ENCODE measurements at regions of chr6 and their contacts with region 1.

Region 1: GRCh38 chr6:16964553-16965501 is 137.0 kb upstream of the STMND1 start:
- DNase-seq: peak; percentile 67
- ATAC-seq: peak; percentile 99
- H3K4me3 ChIP-seq: peak overlapping the region in 1 of 3 experiments; percentile 32; a peak in 2 of 6 replicates
- H3K27ac ChIP-seq: no peak overlapping the region
- H3K4me1 ChIP-seq: peaks cover 6% of the 10 kb centered on the region
- H3K27me3 ChIP-seq: peaks cover 0 to 21% of the 10 kb centered on the region in 2 experiments; a peak in 2 of 5 replicates
- CTCF ChIP-seq: peak; percentile 97
- EP300 ChIP-seq: no peak
- POLR2A ChIP-seq: no peak
- RAD21 ChIP-seq: peak; percentile 88

Region 2: GRCh38 chr6:16286148-16286522 is 678.7 kb before region 1 on chr6:
- CTCF ChIA-PET with region 1: interaction called, 17 read pairs
- POLR2A ChIA-PET with region 1: no interaction called
- in situ Hi-C with region 1: no loop called
- intact Hi-C with region 1: loop called (anchors 5 kb)
- DNase-seq: peak; percentile 37
- ATAC-seq: peak; percentile 86
- H3K4me3 ChIP-seq: no peak overlapping the region
- H3K27ac ChIP-seq: no peak overlapping the region
- H3K4me1 ChIP-seq: no peaks in the 10 kb centered on the region
- H3K27me3 ChIP-seq: peaks cover 1 to 11% of the 10 kb centered on the region in 2 experiments; a peak in 2 of 5 replicates
- CTCF ChIP-seq: peak; percentile 94
- EP300 ChIP-seq: no peak
- POLR2A ChIP-seq: no peak
- RAD21 ChIP-seq: peak; percentile 86

Region 3: GRCh38 chr6:16514249-16514648 is 450.6 kb before region 1 on chr6:
- CTCF ChIA-PET with region 1: no interaction called
- POLR2A ChIA-PET with region 1: no interaction called
- in situ Hi-C with region 1: loop called (anchors 25 kb)
- intact Hi-C with region 1: loop called (anchors 5 kb)
- DNase-seq: peak; percentile 28
- ATAC-seq: peak; percentile 44
- H3K4me3 ChIP-seq: no peak overlapping the region
- H3K27ac ChIP-seq: no peak overlapping the region
- H3K4me1 ChIP-seq: peaks cover 20% of the 10 kb centered on the region
- H3K27me3 ChIP-seq: no peaks in the 10 kb centered on the region
- CTCF ChIP-seq: peak; percentile 43; the same call in 1 of the 2 replicates
- EP300 ChIP-seq: no peak
- POLR2A ChIP-seq: no peak
- RAD21 ChIP-seq: no peak

Region 4: DNA sequence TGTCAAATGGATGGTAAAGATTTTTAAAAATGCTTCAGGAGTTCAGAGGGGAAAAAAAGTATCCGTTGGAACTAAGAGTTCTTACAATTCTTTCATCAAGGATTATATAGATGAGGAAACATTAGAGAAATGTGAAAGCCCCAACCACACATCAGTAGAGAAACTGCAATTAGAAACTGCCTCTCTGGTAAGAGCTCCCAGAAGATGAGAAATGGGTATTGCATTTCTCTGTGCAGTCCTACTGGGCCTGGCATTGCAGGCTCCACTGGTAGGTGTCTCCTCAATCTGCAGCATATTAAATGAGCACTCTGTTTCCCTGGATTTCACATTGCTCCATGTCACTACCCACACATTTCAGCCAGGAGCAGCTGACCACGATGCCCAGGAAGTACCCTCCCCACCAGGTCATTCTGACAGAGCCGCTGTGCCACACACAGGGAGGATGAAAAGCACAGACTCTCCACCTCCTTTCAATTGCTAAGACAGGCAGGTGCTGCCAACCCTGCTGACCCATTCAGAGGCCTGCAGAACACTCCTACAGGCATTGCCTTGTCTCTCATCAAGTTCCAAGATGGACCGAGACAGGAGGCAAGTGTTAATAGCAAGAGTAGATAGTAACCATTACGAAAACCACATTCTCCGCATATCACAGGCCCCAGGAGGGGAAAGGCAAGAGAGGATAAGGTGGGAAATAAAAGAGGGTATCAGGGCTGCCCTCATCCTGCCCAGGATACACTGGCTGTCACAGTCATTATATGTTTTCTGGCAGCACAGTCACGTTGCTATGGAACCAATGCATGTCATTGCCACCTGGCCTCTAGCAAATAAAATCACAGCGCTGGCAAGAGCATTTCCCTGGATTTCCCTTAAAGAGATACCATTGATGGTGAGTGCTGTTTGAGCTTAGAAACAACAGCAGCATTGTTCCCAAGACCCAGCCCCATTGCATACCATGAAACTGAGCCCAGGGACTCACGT is 445.3 kb before region 1 on chr6:
- CTCF ChIA-PET with region 1: no interaction called
- POLR2A ChIA-PET with region 1: no interaction called
- in situ Hi-C with region 1: loop called (anchors 25 kb)
- intact Hi-C with region 1: loop called (anchors 5 kb)
- DNase-seq: peak; percentile 86
- ATAC-seq: peak; percentile 69
- H3K4me3 ChIP-seq: no peak overlapping the region
- H3K27ac ChIP-seq: peak overlapping the region; percentile 39
- H3K4me1 ChIP-seq: peaks cover 22% of the 10 kb centered on the region
- H3K27me3 ChIP-seq: no peaks in the 10 kb centered on the region
- CTCF ChIP-seq: no peak
- EP300 ChIP-seq: no peak
- POLR2A ChIP-seq: no peak
- RAD21 ChIP-seq: no peak

Region 5: GRCh38 chr6:17156112-17156921 is 191.5 kb after region 1 on chr6:
- CTCF ChIA-PET with region 1: no interaction called
- POLR2A ChIA-PET with region 1: no interaction called
- in situ Hi-C with region 1: no loop called
- intact Hi-C with region 1: no loop called
- DNase-seq: peak; percentile 75
- ATAC-seq: peak; percentile 70
- H3K4me3 ChIP-seq: no peak overlapping the region
- H3K27ac ChIP-seq: no peak overlapping the region
- H3K4me1 ChIP-seq: peaks cover 23% of the 10 kb centered on the region
- H3K27me3 ChIP-seq: no peaks in the 10 kb centered on the region; a peak in 1 of 5 replicates
- CTCF ChIP-seq: peak; percentile 85
- EP300 ChIP-seq: no peak
- POLR2A ChIP-seq: no peak
- RAD21 ChIP-seq: peak; percentile 82